Panc1 (cell line): ENCODE measurements at regions of chr1 and their contacts with region 1.

Region 1: DNA sequence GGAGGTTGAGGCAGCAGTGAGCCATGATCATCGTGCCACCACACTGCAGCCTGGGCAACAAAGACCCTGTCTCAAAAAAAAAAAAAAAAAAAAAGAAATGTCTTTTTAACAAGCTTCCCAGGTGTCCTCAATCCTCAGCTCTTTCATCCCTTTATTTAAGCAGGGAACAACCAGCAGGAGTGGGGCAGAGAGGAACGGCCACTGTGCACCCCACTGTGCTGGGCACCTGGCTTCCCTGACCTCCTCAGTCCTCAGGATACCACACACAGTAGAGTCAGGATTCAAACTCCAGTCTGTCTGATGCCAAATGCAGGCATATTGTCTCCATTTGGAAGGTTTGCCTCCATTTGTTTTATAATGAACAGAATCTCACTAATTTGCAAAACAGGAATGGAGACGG is 19.8 kb upstream of the PTAFR start:
- DNase-seq: no peak
- ATAC-seq: no peak
- H3K4me3 ChIP-seq: no peak overlapping the region
- H3K27ac ChIP-seq: no peak overlapping the region
- H3K4me1 ChIP-seq: peaks cover 4% of the 10 kb centered on the region; the same call in 1 of the 2 replicates
- H3K27me3 ChIP-seq: no peaks in the 10 kb centered on the region
- CTCF ChIP-seq: no peak

Region 2: DNA sequence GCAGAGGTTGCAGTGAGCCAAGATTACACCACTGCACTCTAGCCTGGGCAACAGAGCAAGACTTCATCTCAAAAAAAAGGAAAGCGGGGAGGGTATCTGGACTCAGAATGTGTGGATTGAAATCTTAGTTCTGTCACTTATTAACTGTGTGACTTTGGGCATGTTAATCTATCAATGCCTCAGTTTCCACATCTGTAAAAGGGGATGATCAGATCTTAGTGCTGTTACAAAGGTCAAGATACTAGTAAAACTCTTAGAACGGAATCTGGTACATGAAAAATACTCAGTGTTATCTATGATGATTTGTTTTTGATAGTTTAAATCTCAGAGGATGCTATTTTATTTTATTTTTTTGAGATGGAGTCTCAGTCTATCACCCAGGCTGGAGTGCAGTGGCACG is 460.1 kb before region 1 on chr1:
- CTCF ChIA-PET with region 1: no interaction called
- POLR2A ChIA-PET with region 1: interaction called, 10 read pairs
- in situ Hi-C with region 1: no loop called
- intact Hi-C with region 1: no loop called
- DNase-seq: no peak
- ATAC-seq: no peak
- H3K4me3 ChIP-seq: no peak overlapping the region
- H3K27ac ChIP-seq: no peak overlapping the region
- H3K4me1 ChIP-seq: no peaks in the 10 kb centered on the region
- H3K27me3 ChIP-seq: no peaks in the 10 kb centered on the region
- CTCF ChIP-seq: no peak